Cardiac septum (tissue), 1 donor: ENCODE measurements at regions of chr4 and their contacts with region 1.

Region 1: DNA sequence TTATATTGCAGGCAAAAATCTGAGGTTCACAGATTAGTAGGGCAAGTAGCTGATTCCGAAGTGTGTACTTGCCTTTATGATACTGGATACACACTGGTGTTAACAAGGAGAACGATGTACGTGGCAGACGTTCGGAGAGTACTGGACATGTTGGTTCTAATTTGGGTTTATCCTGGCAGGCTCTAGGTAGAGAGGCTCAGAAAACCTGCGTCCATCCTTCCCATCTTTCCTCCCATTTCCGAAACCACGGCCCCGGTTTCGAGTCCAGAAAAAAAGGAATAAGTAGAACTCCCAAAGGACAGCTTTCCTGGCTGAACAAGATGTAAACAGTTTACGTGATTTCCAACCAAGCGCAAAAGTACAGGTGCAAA is 351 bp upstream of the SLC30A9 start:
- DNase-seq: no peak

Region 2: GRCh38 chr4:41934815-41935651 is 54.9 kb before region 1 on chr4 and contains the start of gene TMEM33:
- intact Hi-C with region 1: loop called (anchors 5 kb)
- DNase-seq: peak; percentile 94
- total RNA-seq, gene TMEM33: 27.2 TPM

Region 3: GRCh38 chr4:42720533-42720932 is 730.6 kb after region 1 on chr4:
- intact Hi-C with region 1: no loop called
- DNase-seq: no peak